Ascending aorta (tissue), 2 donors: ENCODE measurements at regions of chr6 and their contacts with region 1.

Region 1: DNA sequence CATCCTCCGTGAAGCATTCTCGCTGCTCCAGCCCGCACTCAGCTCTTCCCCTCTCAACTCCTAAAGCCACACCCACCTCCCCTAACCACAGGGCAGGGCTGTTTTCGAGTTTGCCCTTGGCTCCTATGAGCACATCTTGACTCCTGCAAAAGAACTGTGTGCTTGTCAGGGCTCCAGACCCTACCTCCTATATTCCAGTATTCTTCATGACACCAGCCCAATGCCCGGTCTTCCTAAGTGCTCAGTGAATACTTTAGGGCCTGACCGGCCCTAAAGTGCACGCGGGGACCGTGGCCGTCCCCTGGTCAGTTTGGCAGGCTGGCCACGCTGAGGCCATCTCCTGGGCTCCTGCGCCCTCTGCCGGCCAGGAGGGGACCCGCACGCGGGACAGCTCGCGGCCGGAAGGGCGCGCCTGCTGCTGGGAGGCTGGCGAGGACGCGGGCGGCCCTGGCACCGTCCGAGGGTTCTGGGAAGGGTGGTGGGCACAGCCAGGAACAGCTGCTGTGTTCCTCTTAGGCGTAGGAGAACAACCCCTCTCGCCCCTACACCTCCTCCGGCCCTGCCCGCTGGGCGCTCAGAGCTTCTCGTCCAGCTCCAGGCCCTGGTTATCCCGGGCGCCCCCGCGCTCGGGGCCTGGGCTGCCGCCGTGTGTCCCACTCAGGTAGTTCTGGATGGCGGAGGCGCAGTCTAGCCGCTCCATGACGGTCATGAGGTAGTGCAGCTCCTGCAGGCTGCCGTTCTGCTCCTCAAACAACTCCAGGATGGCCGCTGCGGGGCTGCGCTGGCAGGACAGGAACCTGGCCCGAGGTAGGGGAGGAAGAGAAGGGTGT is 11.0 kb downstream of the UNC5CL start:
- DNase-seq: peak; percentile 34 to 92
- H3K4me3 ChIP-seq: peak overlapping the region; percentile 42 to 69
- H3K27ac ChIP-seq: peak overlapping the region; percentile 42 to 56
- H3K4me1 ChIP-seq: peaks cover 0 to 12% of the 10 kb centered on the region in 2 donors
- H3K27me3 ChIP-seq: no peaks in the 10 kb centered on the region
- CTCF ChIP-seq: peak; percentile 98 to 99 (median 99)

Region 2: GRCh38 chr6:39347906-39348585 is 1680.0 kb before region 1 on chr6:
- intact Hi-C with region 1: loop called (anchors 5 kb)
- DNase-seq: peak in 1 of 2 donors; percentile 84
- H3K4me3 ChIP-seq: no peak overlapping the region
- H3K27ac ChIP-seq: no peak overlapping the region
- H3K4me1 ChIP-seq: peaks cover 4 to 21% of the 10 kb centered on the region in 2 donors
- H3K27me3 ChIP-seq: no peaks in the 10 kb centered on the region
- CTCF ChIP-seq: peak; percentile 62 to 95 (median 89)

Region 3: GRCh38 chr6:39980839-39981580 is 1047.0 kb before region 1 on chr6:
- intact Hi-C with region 1: loop called (anchors 1 kb)
- DNase-seq: no peak
- H3K4me3 ChIP-seq: no peak overlapping the region
- H3K27ac ChIP-seq: peak overlapping the region; percentile 62 to 65
- H3K4me1 ChIP-seq: peaks cover 0 to 24% of the 10 kb centered on the region in 2 donors
- H3K27me3 ChIP-seq: no peaks in the 10 kb centered on the region
- CTCF ChIP-seq: peak; percentile 43 to 57 (median 56)

Region 4: GRCh38 chr6:40894962-40895799 is 132.8 kb before region 1 on chr6:
- intact Hi-C with region 1: loop called (anchors 5 kb)
- DNase-seq: no peak
- H3K4me3 ChIP-seq: no peak overlapping the region
- H3K27ac ChIP-seq: no peak overlapping the region
- H3K4me1 ChIP-seq: peaks cover 0 to 23% of the 10 kb centered on the region in 2 donors
- H3K27me3 ChIP-seq: no peaks in the 10 kb centered on the region
- CTCF ChIP-seq: peak; percentile 31 to 56 (median 40)

Region 5: GRCh38 chr6:41002216-41002615 is 25.8 kb before region 1 on chr6:
- intact Hi-C with region 1: loop called (anchors 1 kb)
- DNase-seq: no peak
- H3K4me3 ChIP-seq: no peak overlapping the region
- H3K27ac ChIP-seq: no peak overlapping the region
- H3K4me1 ChIP-seq: peaks cover 0 to 4% of the 10 kb centered on the region in 2 donors
- H3K27me3 ChIP-seq: no peaks in the 10 kb centered on the region
- CTCF ChIP-seq: no peak

Region 6: GRCh38 chr6:41066867-41067304 is 38.9 kb after region 1 on chr6:
- intact Hi-C with region 1: loop called (anchors 2 kb)
- DNase-seq: peak in 1 of 2 donors; percentile 87
- H3K4me3 ChIP-seq: no peak overlapping the region
- H3K27ac ChIP-seq: no peak overlapping the region
- H3K4me1 ChIP-seq: peaks cover 3 to 7% of the 10 kb centered on the region in 2 donors
- H3K27me3 ChIP-seq: no peaks in the 10 kb centered on the region
- CTCF ChIP-seq: peak; percentile 65 to 79 (median 67)

Region 7: DNA sequence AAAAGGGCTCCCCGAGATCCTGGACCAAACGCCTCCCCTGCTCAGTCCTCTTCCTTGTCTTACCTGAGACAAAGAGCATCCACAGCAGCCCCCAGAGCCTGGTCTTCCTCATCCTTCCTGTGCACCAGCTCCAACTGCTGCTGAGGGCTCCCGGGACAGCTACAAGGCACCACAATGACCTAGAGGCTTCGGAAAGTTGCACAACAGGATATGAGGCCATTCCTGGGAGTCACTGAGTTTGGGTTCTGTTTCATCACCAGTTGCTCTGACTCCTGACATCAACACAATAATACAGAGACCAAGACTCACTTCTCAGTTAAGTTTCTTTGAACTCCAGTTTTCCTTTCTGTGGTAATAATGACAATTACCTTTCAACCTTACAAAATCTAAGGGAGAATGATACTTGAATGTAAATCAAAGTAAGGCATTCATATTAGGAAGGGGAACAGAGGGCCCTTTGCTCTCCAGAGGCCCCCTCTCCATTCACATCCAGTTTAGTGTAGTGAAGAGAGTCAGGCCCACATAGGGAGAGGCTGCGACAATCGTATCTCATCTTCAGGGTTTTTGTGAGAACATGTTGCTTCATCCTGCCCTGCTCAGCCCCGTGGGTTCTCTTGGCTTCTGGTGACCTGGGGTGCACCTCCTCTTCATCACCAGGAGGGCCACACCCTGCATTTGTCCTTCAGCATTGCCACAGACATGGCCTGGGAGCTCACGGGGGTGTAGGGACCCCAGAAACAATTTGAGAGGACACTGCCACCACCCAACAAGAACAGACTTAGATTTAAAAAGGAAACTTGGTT is 258.7 kb after region 1 on chr6 and contains the start of gene TREM1:
- intact Hi-C with region 1: no loop called
- DNase-seq: peak; percentile 36 to 79
- H3K4me3 ChIP-seq: no peak within 1 kb of the TSS
- H3K27ac ChIP-seq: peak within 1 kb of the TSS in 1 of 2 donors; percentile 43
- H3K4me1 ChIP-seq: no peaks in the 10 kb centered on the region
- H3K27me3 ChIP-seq: no peaks in the 10 kb centered on the region
- CTCF ChIP-seq: no peak
- total RNA-seq, gene TREM1: not detected